HepG2 (cell line): ENCODE measurements at regions of chr17 and their contacts with region 1.

Region 1: GRCh38 chr17:72725433-72726068 is 366.9 kb downstream of the SLC39A11 start:
- DNase-seq: peak; percentile 66
- ATAC-seq: peak; percentile 87
- H3K4me3 ChIP-seq: no peak overlapping the region
- H3K27ac ChIP-seq: no peak overlapping the region
- H3K4me1 ChIP-seq: peaks cover 14% of the 10 kb centered on the region
- H3K27me3 ChIP-seq: no peaks in the 10 kb centered on the region
- CTCF ChIP-seq: peak; percentile 98
- EP300 ChIP-seq: 0 out of 4 replicates have a peak, but pooled peaks of 1 of the 2 experiments have one; percentile 19
- POLR2A ChIP-seq: no peak
- RAD21 ChIP-seq: peak; percentile 98

Region 2: DNA sequence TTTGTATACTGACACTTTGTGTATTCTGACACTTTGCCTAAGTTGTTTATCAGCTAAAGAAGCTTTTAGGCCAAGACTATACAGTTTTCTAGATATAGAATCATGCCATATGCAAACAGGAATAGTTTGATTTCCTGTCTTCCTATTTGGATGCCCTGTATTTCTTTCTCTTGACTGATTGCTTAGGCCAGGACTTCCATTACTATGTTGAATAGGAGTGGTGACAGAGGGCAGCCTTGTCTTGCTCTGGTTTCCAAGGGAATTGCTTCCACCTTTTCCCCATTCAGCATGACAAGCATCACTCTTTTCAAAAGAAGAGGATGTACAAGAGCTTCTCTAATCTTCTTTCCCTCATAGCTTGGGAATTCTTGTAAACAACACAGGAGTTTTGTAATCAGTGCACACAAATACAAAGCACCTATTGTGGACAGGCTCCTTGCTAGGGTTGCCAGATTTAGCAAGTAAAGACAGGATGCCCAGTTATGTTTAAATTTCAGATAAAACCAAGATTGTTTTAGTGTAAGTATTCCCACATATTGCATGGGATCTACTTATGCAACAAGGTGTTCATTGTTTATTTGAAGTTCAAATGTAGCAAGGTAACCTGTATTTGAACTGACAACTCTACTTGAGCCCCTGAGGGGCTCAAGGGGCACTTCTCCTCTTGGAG is 133.4 kb after region 1 on chr17:
- CTCF ChIA-PET with region 1: no interaction called
- POLR2A ChIA-PET with region 1: no interaction called
- in situ Hi-C with region 1: no loop called
- intact Hi-C with region 1: loop called (anchors 5 kb)
- DNase-seq: peak; percentile 60
- ATAC-seq: peak; percentile 58
- H3K4me3 ChIP-seq: no peak overlapping the region
- H3K27ac ChIP-seq: no peak overlapping the region
- H3K4me1 ChIP-seq: peaks cover 7% of the 10 kb centered on the region
- H3K27me3 ChIP-seq: no peaks in the 10 kb centered on the region
- CTCF ChIP-seq: no peak
- EP300 ChIP-seq: peak in 1 of 2 experiments; percentile 62; a peak in 1 of 4 replicates
- POLR2A ChIP-seq: no peak
- RAD21 ChIP-seq: no peak

Region 3: GRCh38 chr17:72985881-72986720 is 260.6 kb after region 1 on chr17:
- CTCF ChIA-PET with region 1: interaction called, 9 read pairs
- POLR2A ChIA-PET with region 1: no interaction called
- in situ Hi-C with region 1: no loop called
- intact Hi-C with region 1: loop called (anchors 1 kb)
- DNase-seq: peak; percentile 79
- ATAC-seq: peak; percentile 97
- H3K4me3 ChIP-seq: no peak overlapping the region
- H3K27ac ChIP-seq: no peak overlapping the region
- H3K4me1 ChIP-seq: peaks cover 26% of the 10 kb centered on the region
- H3K27me3 ChIP-seq: no peaks in the 10 kb centered on the region
- CTCF ChIP-seq: peak; percentile 92
- EP300 ChIP-seq: no peak
- POLR2A ChIP-seq: no peak
- RAD21 ChIP-seq: peak; percentile 95

Region 4: GRCh38 chr17:73192894-73193701 is 467.5 kb after region 1 on chr17 and contains the start of gene COG1:
- CTCF ChIA-PET with region 1: interaction called, 22 read pairs
- POLR2A ChIA-PET with region 1: no interaction called
- in situ Hi-C with region 1: loop called (anchors 5 kb)
- intact Hi-C with region 1: loop called (anchors 1 kb)
- DNase-seq: peak; percentile 81
- ATAC-seq: peak; percentile 77
- H3K4me3 ChIP-seq: peak within 1 kb of the TSS; percentile 84 to 100 (median 90)
- H3K27ac ChIP-seq: peak within 1 kb of the TSS; percentile 95
- H3K4me1 ChIP-seq: peaks cover 61% of the 10 kb centered on the region
- H3K27me3 ChIP-seq: no peaks in the 10 kb centered on the region; a peak in 1 of 5 replicates
- CTCF ChIP-seq: 0 out of 2 replicates have a peak, but pooled peaks have one; percentile 22
- EP300 ChIP-seq: 0 out of 4 replicates have a peak, but pooled peaks of 1 of the 2 experiments have one; percentile 11
- POLR2A ChIP-seq: peak; percentile 71 to 89
- RAD21 ChIP-seq: peak; percentile 57; the same call in 1 of the 2 replicates
- total RNA-seq, gene COG1: 30.4 and 36.6 TPM in 2 replicates

Region 5: GRCh38 chr17:73255671-73256181 is 530.2 kb after region 1 on chr17:
- CTCF ChIA-PET with region 1: no interaction called
- POLR2A ChIA-PET with region 1: no interaction called
- in situ Hi-C with region 1: no loop called
- intact Hi-C with region 1: loop called (anchors 5 kb)
- DNase-seq: no peak
- ATAC-seq: peak; percentile 77
- H3K4me3 ChIP-seq: no peak overlapping the region
- H3K27ac ChIP-seq: no peak overlapping the region
- H3K4me1 ChIP-seq: peaks cover 35% of the 10 kb centered on the region
- H3K27me3 ChIP-seq: no peaks in the 10 kb centered on the region
- CTCF ChIP-seq: peak; percentile 100
- EP300 ChIP-seq: no peak
- POLR2A ChIP-seq: no peak
- RAD21 ChIP-seq: peak; percentile 100